ENCODE measurements at regions of chr3 and their contacts with region 1.

Region 1: DNA sequence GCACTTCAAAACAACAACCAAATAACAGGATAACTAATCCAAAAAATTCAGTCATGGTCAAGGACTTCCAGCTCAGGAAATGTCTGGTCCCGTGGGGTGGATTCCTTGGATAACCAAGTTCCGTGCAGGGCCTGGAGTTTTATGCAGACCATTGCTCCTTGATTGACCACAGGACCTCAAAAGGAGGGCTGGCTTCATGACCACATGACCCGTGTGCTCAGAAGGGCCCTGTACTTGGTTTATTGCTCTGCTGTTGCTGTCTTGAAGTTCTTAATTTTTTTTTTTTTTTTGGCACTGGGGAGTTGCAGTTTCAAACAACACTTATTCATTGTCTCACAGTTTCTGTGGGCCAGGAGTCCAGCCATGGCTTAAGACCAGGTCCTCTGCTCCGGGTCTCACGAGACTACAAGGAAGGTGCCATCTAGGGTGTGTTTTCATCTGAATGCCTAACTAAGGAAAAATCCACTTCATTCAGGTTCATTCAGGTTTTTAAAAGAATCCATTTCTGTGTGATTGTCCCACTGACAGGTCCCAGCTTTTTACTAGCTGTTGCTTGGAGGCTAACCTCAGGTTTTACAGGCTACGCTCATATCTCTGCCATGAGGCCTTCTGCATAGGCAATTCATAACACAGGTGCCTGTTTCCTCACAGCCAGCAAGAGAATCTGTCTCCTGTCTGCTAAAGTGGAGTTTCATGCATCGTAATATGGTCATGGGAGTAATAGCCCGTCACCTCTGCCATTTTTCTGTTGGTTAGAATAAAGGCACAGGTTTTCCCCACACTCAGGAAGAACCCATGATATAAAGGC is 65.3 kb downstream of the FLNB start:
- DNase-seq: peak; percentile 27
- H3K4me3 ChIP-seq: no peak overlapping the region
- H3K27ac ChIP-seq: peak overlapping the region; percentile 59 to 66
- H3K4me1 ChIP-seq: peaks cover 15% of the 10 kb centered on the region
- H3K27me3 ChIP-seq: no peaks in the 10 kb centered on the region
- CTCF ChIP-seq: no peak
- POLR2A ChIP-seq: no peak

Region 2: DNA sequence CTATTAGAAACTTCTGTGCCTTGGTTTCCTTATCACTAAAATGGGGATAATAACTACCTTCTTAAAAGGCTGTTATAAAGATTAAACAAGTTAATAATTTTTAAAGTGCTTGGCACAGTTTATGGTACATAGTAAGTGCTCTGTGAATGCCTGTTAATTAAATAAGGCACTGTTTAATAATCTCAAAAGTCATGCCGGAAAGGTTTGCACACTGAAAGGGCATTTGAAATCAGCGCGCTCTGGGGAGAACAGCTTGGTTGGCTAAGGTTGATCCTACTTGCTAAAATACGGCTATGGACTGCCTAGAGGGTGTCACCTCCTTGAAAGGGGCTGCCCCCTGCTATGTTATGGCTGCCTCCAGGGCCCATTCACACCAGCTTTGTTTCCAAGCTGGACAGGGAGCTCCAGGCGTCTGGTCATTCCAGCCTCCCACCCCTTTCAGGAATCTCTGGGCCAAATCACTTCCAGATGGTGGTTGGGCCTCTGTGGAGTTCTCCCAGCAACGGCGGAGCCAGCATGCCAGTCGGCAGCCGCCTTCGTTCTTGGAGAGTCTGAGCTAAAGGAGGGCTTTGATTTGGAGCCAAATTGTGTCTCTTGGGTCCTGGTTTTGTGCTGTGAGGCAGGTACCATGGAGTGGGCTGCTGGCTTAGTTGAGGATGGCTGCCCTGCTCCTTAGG is 59.4 kb before region 1 on chr3:
- intact Hi-C with region 1: loop called (anchors 5 kb)
- DNase-seq: no peak
- H3K4me3 ChIP-seq: no peak overlapping the region
- H3K27ac ChIP-seq: peak overlapping the region; percentile 54 to 93
- H3K4me1 ChIP-seq: peaks cover 25% of the 10 kb centered on the region
- H3K27me3 ChIP-seq: no peaks in the 10 kb centered on the region
- CTCF ChIP-seq: no peak
- POLR2A ChIP-seq: no peak

Region 3: GRCh38 chr3:58167431-58168351 is 94.2 kb after region 1 on chr3:
- intact Hi-C with region 1: loop called (anchors 5 kb)
- DNase-seq: peak; percentile 41
- H3K4me3 ChIP-seq: no peak overlapping the region
- H3K27ac ChIP-seq: peak overlapping the region; percentile 54 to 83
- H3K4me1 ChIP-seq: peaks cover 20% of the 10 kb centered on the region
- H3K27me3 ChIP-seq: no peaks in the 10 kb centered on the region
- CTCF ChIP-seq: peak; percentile 53 to 74 (median 62)
- POLR2A ChIP-seq: no peak

Measured in prostate gland (tissue), 2 donors.